HepG2 (cell line): ENCODE measurements at regions of chr19 and their contacts with region 1.

Region 1: GRCh38 chr19:2543463-2544442 is 67.8 kb downstream of the GADD45B start:
- DNase-seq: peak; percentile 94
- ATAC-seq: peak; percentile 74
- H3K4me3 ChIP-seq: peak overlapping the region in 2 of 3 experiments; percentile 28 to 65; a peak in 4 of 6 replicates
- H3K27ac ChIP-seq: peak overlapping the region; percentile 98
- H3K4me1 ChIP-seq: peaks cover 81% of the 10 kb centered on the region
- H3K27me3 ChIP-seq: no peaks in the 10 kb centered on the region
- CTCF ChIP-seq: peak; percentile 73
- EP300 ChIP-seq: peak in 1 of 2 experiments; percentile 78; a peak in 3 of 4 replicates
- POLR2A ChIP-seq: peak; percentile 45 to 77
- RAD21 ChIP-seq: peak; percentile 88

Region 2: GRCh38 chr19:2494444-2495129 is 49.2 kb before region 1 on chr19:
- CTCF ChIA-PET with region 1: no interaction called
- POLR2A ChIA-PET with region 1: interaction called, 3 read pairs
- in situ Hi-C with region 1: no loop called
- intact Hi-C with region 1: loop called (anchors 2 kb)
- DNase-seq: no peak
- ATAC-seq: peak; percentile 50
- H3K4me3 ChIP-seq: peak overlapping the region; percentile 55 to 80 (median 60)
- H3K27ac ChIP-seq: no peak overlapping the region
- H3K4me1 ChIP-seq: peaks cover 55% of the 10 kb centered on the region
- H3K27me3 ChIP-seq: peaks cover 17 to 71% of the 10 kb centered on the region in 2 experiments
- CTCF ChIP-seq: no peak
- EP300 ChIP-seq: no peak
- POLR2A ChIP-seq: no peak
- RAD21 ChIP-seq: no peak

Region 3: GRCh38 chr19:2524838-2525723 is 18.7 kb before region 1 on chr19:
- CTCF ChIA-PET with region 1: no interaction called
- POLR2A ChIA-PET with region 1: interaction called, 62 read pairs
- in situ Hi-C with region 1: no loop called
- intact Hi-C with region 1: no loop called
- DNase-seq: peak; percentile 68
- ATAC-seq: peak; percentile 79
- H3K4me3 ChIP-seq: peak overlapping the region in 2 of 3 experiments; percentile 42 to 57; a peak in 5 of 6 replicates
- H3K27ac ChIP-seq: no peak overlapping the region
- H3K4me1 ChIP-seq: peaks cover 84% of the 10 kb centered on the region
- H3K27me3 ChIP-seq: no peaks in the 10 kb centered on the region
- CTCF ChIP-seq: no peak
- EP300 ChIP-seq: no peak
- POLR2A ChIP-seq: no peak
- RAD21 ChIP-seq: no peak

Region 4: GRCh38 chr19:2561895-2562294 is 18.1 kb after region 1 on chr19:
- CTCF ChIA-PET with region 1: no interaction called
- POLR2A ChIA-PET with region 1: interaction called, 53 read pairs
- in situ Hi-C with region 1: no loop called
- intact Hi-C with region 1: no loop called
- DNase-seq: no peak
- ATAC-seq: peak; percentile 45; the same call in 2 of the 3 replicates
- H3K4me3 ChIP-seq: peak overlapping the region; percentile 31 to 59 (median 48); a peak in 4 of 6 replicates
- H3K27ac ChIP-seq: peak overlapping the region; percentile 54
- H3K4me1 ChIP-seq: peaks cover 60% of the 10 kb centered on the region
- H3K27me3 ChIP-seq: no peaks in the 10 kb centered on the region
- CTCF ChIP-seq: no peak
- EP300 ChIP-seq: no peak
- POLR2A ChIP-seq: no peak
- RAD21 ChIP-seq: no peak

Region 5: DNA sequence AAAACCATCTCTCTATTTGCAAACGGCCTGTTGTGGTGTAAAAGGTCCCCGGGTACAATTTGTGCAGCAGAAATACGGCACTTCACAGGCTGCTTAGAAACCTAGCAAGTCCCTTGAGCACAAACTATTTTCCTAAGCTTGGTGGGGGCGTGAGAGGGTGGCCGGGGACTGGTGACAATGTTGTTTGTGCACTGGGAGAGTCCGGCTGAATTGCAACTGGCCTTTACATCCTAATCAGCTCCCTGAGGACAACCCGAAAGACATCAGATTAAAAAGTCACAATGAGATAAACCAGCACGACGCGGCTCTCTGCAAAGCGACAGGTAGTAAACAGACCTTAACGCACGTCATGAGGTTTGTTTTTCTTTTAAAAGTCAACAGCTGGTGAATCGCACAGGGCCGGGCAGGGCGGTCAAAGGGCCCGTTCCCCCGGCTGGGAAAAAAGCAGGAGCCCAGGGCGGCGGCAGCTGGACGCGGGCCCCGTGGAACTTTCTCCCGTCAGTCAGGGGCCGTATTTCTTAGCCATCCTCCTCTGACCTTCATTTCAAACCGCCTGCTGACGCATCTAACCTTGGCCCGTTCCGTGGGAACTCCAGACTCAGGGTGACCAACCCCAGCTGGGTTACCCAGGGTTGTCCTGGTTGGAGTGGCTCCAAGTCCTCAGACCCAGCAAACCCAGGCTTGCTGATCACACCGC is 44.5 kb after region 1 on chr19:
- CTCF ChIA-PET with region 1: no interaction called
- POLR2A ChIA-PET with region 1: interaction called, 10 read pairs
- in situ Hi-C with region 1: no loop called
- intact Hi-C with region 1: no loop called
- DNase-seq: peak; percentile 77
- ATAC-seq: peak; percentile 91
- H3K4me3 ChIP-seq: peak overlapping the region; percentile 17 to 55 (median 21); a peak in 5 of 6 replicates
- H3K27ac ChIP-seq: peak overlapping the region; percentile 72
- H3K4me1 ChIP-seq: peaks cover 57% of the 10 kb centered on the region
- H3K27me3 ChIP-seq: no peaks in the 10 kb centered on the region
- CTCF ChIP-seq: no peak
- EP300 ChIP-seq: no peak
- POLR2A ChIP-seq: no peak
- RAD21 ChIP-seq: no peak